Breast epithelium (tissue), 4 donors: ENCODE measurements at regions of chr13 and their contacts with region 1.

Region 1: DNA sequence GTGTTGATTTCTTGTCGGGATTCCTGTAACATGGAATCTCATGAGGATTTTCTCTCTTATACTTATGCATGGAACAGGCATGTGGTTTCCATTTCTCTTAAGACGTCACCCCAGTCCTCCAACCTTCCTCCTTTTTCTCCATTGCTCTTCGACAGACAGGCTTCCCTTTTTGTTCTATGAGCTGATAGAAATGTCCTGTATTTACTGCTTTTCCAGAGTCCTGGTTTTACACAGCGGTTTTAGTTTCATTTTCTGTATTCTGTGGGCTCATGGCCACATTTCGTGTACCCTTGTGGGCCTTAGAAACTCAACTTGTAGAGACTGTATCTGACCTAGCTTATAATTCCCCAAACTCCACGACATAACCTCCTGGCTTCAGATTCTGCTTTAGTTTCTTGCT is 113.1 kb downstream of the PAN3 start:
- DNase-seq: no peak
- H3K4me3 ChIP-seq: no peak overlapping the region
- H3K27ac ChIP-seq: no peak overlapping the region
- H3K4me1 ChIP-seq: no peaks in the 10 kb centered on the region
- H3K27me3 ChIP-seq: no peaks in the 10 kb centered on the region
- CTCF ChIP-seq: no peak
- POLR2A ChIP-seq: no peak

Region 2: DNA sequence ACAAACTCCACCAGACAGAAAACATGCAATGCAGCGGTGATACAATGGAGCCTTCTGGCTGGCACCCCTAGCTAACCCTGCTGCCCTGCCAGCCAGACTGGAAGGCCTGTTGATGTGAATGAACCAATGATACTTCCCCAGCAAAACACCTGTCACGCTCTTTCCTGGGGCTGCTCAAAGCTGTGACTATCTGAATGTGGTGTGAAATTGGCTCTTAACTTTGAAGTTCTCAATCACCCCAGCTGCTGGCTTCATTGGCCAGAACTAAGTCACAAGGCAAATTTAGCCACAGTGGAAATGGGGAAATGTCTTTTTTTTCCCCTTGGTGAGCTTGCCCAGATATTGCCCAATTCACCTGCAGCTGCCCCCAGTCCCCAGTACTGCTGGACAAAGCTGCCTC is 1196.7 kb after region 1 on chr13:
- intact Hi-C with region 1: loop called (anchors 10 kb)
- DNase-seq: no peak
- H3K4me3 ChIP-seq: no peak overlapping the region
- H3K27ac ChIP-seq: no peak overlapping the region
- H3K4me1 ChIP-seq: no peaks in the 10 kb centered on the region
- H3K27me3 ChIP-seq: no peaks in the 10 kb centered on the region
- CTCF ChIP-seq: no peak
- POLR2A ChIP-seq: no peak